GM12878 (cell line): ENCODE measurements at regions of chr3 and their contacts with region 1.

Region 1: GRCh38 chr3:67113802-67114407 is 115.8 kb downstream of the KBTBD8 start:
- DNase-seq: peak; percentile 59
- ATAC-seq: peak; percentile 99
- H3K4me3 ChIP-seq: no peak overlapping the region
- H3K27ac ChIP-seq: no peak overlapping the region
- H3K4me1 ChIP-seq: no peaks in the 10 kb centered on the region
- H3K27me3 ChIP-seq: no peaks in the 10 kb centered on the region
- CTCF ChIP-seq: peak; percentile 94 to 98 (median 98)
- EP300 ChIP-seq: no peak
- POLR2A ChIP-seq: no peak
- RAD21 ChIP-seq: peak; percentile 92

Region 2: GRCh38 chr3:66856533-66856932 is 257.4 kb before region 1 on chr3:
- CTCF ChIA-PET with region 1: no interaction called
- POLR2A ChIA-PET with region 1: no interaction called
- RAD21 ChIA-PET with region 1: no interaction called
- SMC1A ChIA-PET with region 1: no interaction called
- in situ Hi-C with region 1: no loop called
- intact Hi-C with region 1: no loop called
- DNase-seq: no peak
- ATAC-seq: peak; percentile 94
- H3K4me3 ChIP-seq: no peak overlapping the region
- H3K27ac ChIP-seq: no peak overlapping the region
- H3K4me1 ChIP-seq: no peaks in the 10 kb centered on the region
- H3K27me3 ChIP-seq: no peaks in the 10 kb centered on the region; a peak in 1 of 4 replicates
- CTCF ChIP-seq: no peak
- EP300 ChIP-seq: peak in 1 of 2 experiments; percentile 23; a peak in 1 of 4 replicates
- POLR2A ChIP-seq: no peak
- RAD21 ChIP-seq: no peak

Region 3: GRCh38 chr3:66989860-66990665 is 123.8 kb before region 1 on chr3:
- CTCF ChIA-PET with region 1: interaction called, 42 read pairs
- POLR2A ChIA-PET with region 1: no interaction called
- RAD21 ChIA-PET with region 1: interaction called, 24 read pairs
- SMC1A ChIA-PET with region 1: interaction called, 21 read pairs
- in situ Hi-C with region 1: no loop called
- intact Hi-C with region 1: loop called (anchors 1 kb)
- DNase-seq: peak; percentile 40
- ATAC-seq: peak; percentile 93
- H3K4me3 ChIP-seq: peak overlapping the region; percentile 67
- H3K27ac ChIP-seq: peak overlapping the region; percentile 45
- H3K4me1 ChIP-seq: no peaks in the 10 kb centered on the region
- H3K27me3 ChIP-seq: no peaks in the 10 kb centered on the region; a peak in 1 of 4 replicates
- CTCF ChIP-seq: peak; percentile 67 to 70 (median 68)
- EP300 ChIP-seq: no peak
- POLR2A ChIP-seq: no peak
- RAD21 ChIP-seq: peak; percentile 83

Region 4: GRCh38 chr3:67094774-67095173 is 19.1 kb before region 1 on chr3:
- CTCF ChIA-PET with region 1: interaction called, 11 read pairs
- POLR2A ChIA-PET with region 1: no interaction called
- RAD21 ChIA-PET with region 1: interaction called, 3 read pairs
- SMC1A ChIA-PET with region 1: interaction called, 4 read pairs
- in situ Hi-C with region 1: no loop called
- intact Hi-C with region 1: no loop called
- DNase-seq: no peak
- ATAC-seq: no peak
- H3K4me3 ChIP-seq: no peak overlapping the region
- H3K27ac ChIP-seq: no peak overlapping the region
- H3K4me1 ChIP-seq: no peaks in the 10 kb centered on the region
- H3K27me3 ChIP-seq: no peaks in the 10 kb centered on the region
- CTCF ChIP-seq: no peak
- EP300 ChIP-seq: no peak
- POLR2A ChIP-seq: no peak
- RAD21 ChIP-seq: no peak

Region 5: DNA sequence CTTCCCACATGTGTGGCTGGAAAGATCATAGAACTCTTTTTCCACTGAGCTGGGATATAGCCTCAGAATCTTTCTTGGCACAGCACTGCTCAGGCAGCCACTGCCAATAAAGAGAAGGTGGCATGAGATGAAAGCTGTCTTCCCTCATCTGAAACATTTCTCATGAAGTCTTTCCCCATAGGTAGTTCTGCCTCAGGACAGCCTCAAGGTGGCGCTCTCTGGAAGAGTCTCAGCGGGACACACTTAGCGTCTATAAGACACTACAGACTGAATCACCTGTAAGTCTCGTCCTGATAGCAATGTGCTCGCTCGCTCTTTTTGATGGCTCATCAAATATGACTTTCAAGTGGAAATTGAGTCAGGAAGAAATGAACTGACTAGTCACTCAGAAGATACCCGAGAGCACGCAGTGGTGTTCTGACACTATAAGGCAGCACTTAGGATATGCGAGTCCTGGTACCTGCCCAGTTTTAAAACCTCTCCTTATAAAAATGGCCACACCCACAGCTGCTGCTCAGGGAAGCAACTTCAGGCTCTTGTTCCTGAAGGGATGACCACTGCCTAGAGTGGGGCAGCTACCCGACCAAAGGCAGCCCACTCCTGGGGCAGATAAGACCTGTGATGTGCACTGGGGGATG is 271.0 kb after region 1 on chr3:
- CTCF ChIA-PET with region 1: interaction called, 7 read pairs
- POLR2A ChIA-PET with region 1: no interaction called
- RAD21 ChIA-PET with region 1: interaction called, 4 read pairs
- SMC1A ChIA-PET with region 1: interaction called, 4 read pairs
- in situ Hi-C with region 1: no loop called
- intact Hi-C with region 1: loop called (anchors 5 kb)
- DNase-seq: no peak
- ATAC-seq: peak; percentile 68
- H3K4me3 ChIP-seq: no peak overlapping the region
- H3K27ac ChIP-seq: no peak overlapping the region
- H3K4me1 ChIP-seq: peaks cover 6% of the 10 kb centered on the region; the same call in 1 of the 2 replicates
- H3K27me3 ChIP-seq: no peaks in the 10 kb centered on the region
- CTCF ChIP-seq: peak; percentile 39 to 61 (median 42)
- EP300 ChIP-seq: no peak
- POLR2A ChIP-seq: no peak
- RAD21 ChIP-seq: peak; percentile 63

Region 6: GRCh38 chr3:68017067-68017466 is 903.2 kb after region 1 on chr3:
- CTCF ChIA-PET with region 1: interaction called, 3 read pairs
- POLR2A ChIA-PET with region 1: no interaction called
- RAD21 ChIA-PET with region 1: no interaction called
- SMC1A ChIA-PET with region 1: no interaction called
- in situ Hi-C with region 1: no loop called
- intact Hi-C with region 1: loop called (anchors 5 kb)
- DNase-seq: no peak
- ATAC-seq: no peak
- H3K4me3 ChIP-seq: no peak overlapping the region
- H3K27ac ChIP-seq: no peak overlapping the region
- H3K4me1 ChIP-seq: no peaks in the 10 kb centered on the region
- H3K27me3 ChIP-seq: no peaks in the 10 kb centered on the region
- CTCF ChIP-seq: no peak
- EP300 ChIP-seq: no peak
- POLR2A ChIP-seq: no peak
- RAD21 ChIP-seq: no peak